ENCODE measurements at regions of chr4 and their contacts with region 1.

Region 1: DNA sequence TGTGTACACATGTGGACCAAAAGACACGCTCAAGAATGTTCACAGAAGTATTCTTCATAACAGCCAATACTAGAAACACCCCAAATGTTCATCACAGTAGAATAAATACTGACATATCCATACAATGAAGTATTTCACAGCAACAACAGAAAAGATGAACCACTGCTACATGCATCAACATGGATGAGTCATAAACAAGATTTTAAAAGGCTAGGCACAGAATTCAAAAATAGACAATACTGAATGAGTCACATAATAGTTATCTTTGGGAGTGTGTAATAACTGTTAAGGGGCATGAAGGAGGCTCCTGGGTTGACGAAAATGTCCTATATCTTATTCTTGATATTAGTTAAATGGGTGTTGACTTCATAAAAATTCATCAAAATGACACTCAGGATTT is 43.5 kb downstream of the CLOCK start:
- DNase-seq: no peak
- ATAC-seq: no peak
- H3K4me3 Mint-ChIP-seq: no peak overlapping the region
- H3K27ac Mint-ChIP-seq: no peak overlapping the region
- H3K4me1 Mint-ChIP-seq: peaks cover 3% of the 10 kb centered on the region
- H3K27me3 Mint-ChIP-seq: no peaks in the 10 kb centered on the region
- CTCF ChIP-seq: no peak

Region 2: GRCh38 chr4:54632537-54632936 is 870.6 kb before region 1 on chr4:
- CTCF ChIA-PET with region 1: no interaction called
- POLR2A ChIA-PET with region 1: no interaction called
- intact Hi-C with region 1: no loop called
- DNase-seq: no peak
- ATAC-seq: no peak
- H3K4me3 Mint-ChIP-seq: no peak overlapping the region
- H3K27ac Mint-ChIP-seq: no peak overlapping the region
- H3K4me1 Mint-ChIP-seq: no peaks in the 10 kb centered on the region
- H3K27me3 Mint-ChIP-seq: peaks cover 6% of the 10 kb centered on the region
- CTCF ChIP-seq: no peak

Region 3: DNA sequence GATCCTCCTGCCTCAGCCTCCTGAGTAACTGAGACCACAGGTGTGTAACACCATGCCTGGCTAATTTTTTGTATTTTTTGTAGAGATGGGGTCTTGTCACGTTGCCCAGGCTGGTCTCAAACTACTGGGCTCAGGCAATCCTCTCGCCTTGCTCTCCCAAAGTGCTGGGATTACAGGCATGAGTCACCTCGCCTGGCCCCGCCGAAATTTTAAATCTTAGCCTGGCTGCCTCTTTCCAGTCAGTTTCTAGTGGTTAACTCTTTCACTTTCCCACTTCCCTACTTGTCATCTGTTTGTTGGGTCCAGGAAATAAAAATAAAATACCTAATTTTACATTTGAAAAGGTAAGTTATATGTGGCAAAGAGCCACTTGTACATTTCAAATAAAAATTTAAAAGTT is 45.0 kb before region 1 on chr4:
- CTCF ChIA-PET with region 1: no interaction called
- POLR2A ChIA-PET with region 1: interaction called, 10 read pairs
- intact Hi-C with region 1: no loop called
- DNase-seq: no peak
- ATAC-seq: no peak
- H3K4me3 Mint-ChIP-seq: no peak overlapping the region
- H3K27ac Mint-ChIP-seq: no peak overlapping the region
- H3K4me1 Mint-ChIP-seq: no peaks in the 10 kb centered on the region
- H3K27me3 Mint-ChIP-seq: no peaks in the 10 kb centered on the region
- CTCF ChIP-seq: no peak